RWPE1 (cell line): ENCODE measurements at regions of chr20 and their contacts with region 1.

Region 1: DNA sequence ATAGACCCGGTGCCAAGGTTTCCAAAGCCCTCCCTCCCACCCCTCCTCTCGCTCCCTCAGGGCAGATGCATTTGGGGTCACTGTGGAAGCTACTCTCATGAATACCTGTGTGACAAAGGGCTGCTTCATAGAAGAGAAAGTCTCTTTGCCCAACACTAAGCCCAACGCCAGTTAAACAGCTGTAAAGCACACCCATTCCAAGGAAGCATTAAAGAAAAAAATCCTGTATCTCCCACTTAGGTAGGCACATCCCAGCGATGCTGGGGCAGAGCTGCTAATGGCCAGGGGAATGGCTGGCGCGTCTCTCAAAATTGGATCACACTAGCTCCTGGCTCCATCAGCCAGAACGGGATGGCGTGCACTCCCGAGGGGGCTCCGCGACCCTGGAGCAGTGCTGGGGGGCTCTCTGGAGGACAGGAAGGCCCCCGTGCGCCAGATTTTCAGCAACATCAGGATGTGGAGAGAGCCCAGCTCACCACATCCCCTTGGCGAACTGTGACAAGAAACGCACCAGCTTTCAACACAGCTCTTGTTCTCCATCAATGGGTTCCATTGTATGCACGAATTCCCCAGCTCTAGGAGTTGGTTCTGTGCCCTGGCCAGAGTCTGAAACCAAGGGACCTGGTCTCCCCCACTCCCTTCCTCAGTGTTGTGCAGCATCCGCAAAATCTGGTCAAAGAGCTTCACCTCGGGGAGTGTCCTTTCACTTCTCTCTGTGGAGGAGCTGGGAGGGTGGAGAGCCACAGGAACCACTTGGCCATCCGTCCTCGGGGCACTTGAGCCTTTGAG is 74.0 kb downstream of the TFAP2C start:
- DNase-seq: no peak
- H3K27ac ChIP-seq: no peak overlapping the region
- CTCF ChIP-seq: no peak

Region 2: DNA sequence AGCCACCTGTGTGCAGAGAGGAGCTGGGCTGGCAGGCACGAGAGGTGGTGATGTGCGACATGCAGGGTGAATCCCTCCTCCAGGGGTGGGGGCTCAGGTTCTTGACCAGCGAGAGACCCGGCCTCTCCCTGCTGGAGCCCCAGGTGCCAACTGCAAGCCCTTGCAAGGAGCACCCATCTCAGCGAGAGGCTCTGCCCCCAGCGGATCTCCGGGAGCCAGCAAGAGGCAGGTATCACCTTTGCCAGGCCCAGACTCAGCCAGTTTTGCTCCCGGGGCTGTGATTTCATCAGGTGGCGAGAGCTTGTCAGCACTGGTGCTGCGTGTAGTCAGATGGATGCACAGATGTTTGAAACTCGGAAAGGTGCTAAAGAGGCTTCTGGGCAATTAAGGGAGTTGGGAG is 13.7 kb after region 1 on chr20:
- CTCF ChIA-PET with region 1: interaction called, 11 read pairs
- POLR2A ChIA-PET with region 1: no interaction called
- DNase-seq: peak; percentile 62
- H3K27ac ChIP-seq: no peak overlapping the region
- CTCF ChIP-seq: no peak